ENCODE measurements at regions of chr19 and their contacts with region 1.

Region 1: GRCh38 chr19:2507109-2507508 is 31.2 kb downstream of the GADD45B start:
- DNase-seq: peak in 9 of 10 donors; percentile 13 to 69 (median 48)
- ATAC-seq: peak; percentile 9 to 69
- H3K4me3 Mint-ChIP-seq: peak overlapping the region in 8 of 10 donors; percentile 15 to 66 (median 47)
- H3K27ac Mint-ChIP-seq: peak overlapping the region; percentile 53 to 90 (median 83)
- H3K4me1 Mint-ChIP-seq: peaks cover 8 to 33% (median 32%) of the 10 kb centered on the region in 4 donors
- H3K27me3 Mint-ChIP-seq: peaks cover 0 to 2% (median 0%) of the 10 kb centered on the region in 5 donors

Region 2: GRCh38 chr19:2391118-2391725 is 115.9 kb before region 1 on chr19:
- POLR2A ChIA-PET with region 1: no interaction called
- DNase-seq: peak in 8 of 10 donors; percentile 36 to 76 (median 48)
- ATAC-seq: peak; percentile 49 to 57
- H3K4me3 Mint-ChIP-seq: no peak overlapping the region
- H3K27ac Mint-ChIP-seq: peak overlapping the region in 3 of 10 donors; percentile 66 to 74 (median 73)
- H3K4me1 Mint-ChIP-seq: peaks cover 3 to 16% (median 5%) of the 10 kb centered on the region in 4 donors
- H3K27me3 Mint-ChIP-seq: peaks cover 0 to 6% (median 0%) of the 10 kb centered on the region in 5 donors

Region 3: GRCh38 chr19:2494444-2495129 is 12.5 kb before region 1 on chr19:
- POLR2A ChIA-PET with region 1: interaction called, 18 read pairs
- DNase-seq: peak; percentile 28 to 77 (median 42)
- ATAC-seq: peak; percentile 75 to 81
- H3K4me3 Mint-ChIP-seq: peak overlapping the region; percentile 57 to 85 (median 80)
- H3K27ac Mint-ChIP-seq: peak overlapping the region in 6 of 10 donors; percentile 48 to 78 (median 68)
- H3K4me1 Mint-ChIP-seq: peaks cover 10 to 44% (median 34%) of the 10 kb centered on the region in 4 donors
- H3K27me3 Mint-ChIP-seq: peaks cover 3 to 42% (median 13%) of the 10 kb centered on the region in 5 donors

Region 4: DNA sequence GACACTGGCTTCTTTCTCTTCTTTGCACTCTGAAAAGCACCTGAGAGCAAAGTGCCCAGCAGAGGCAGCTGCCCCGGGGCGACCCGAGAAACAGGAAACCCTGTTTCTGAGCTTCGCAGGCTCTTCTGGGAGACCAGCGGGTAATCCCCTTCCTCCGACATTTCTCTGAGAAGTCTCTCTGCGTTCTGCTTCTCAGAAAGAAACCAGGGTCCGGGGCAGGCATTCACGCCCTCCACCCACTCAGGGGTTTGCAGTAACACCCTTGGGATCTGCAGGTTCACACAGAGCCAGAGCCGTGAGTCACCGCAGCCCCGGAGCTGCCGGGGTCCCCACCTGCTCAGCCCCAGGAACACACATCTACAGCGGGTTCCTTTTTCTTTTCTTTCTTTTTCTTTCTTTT is 54.8 kb after region 1 on chr19:
- POLR2A ChIA-PET with region 1: interaction called, 11 read pairs
- DNase-seq: peak; percentile 42 to 82 (median 66)
- ATAC-seq: peak; percentile 94 to 98
- H3K4me3 Mint-ChIP-seq: peak overlapping the region; percentile 92 to 97 (median 96)
- H3K27ac Mint-ChIP-seq: peak overlapping the region; percentile 95 to 99 (median 98)
- H3K4me1 Mint-ChIP-seq: peaks cover 5 to 24% (median 19%) of the 10 kb centered on the region in 4 donors
- H3K27me3 Mint-ChIP-seq: no peaks in the 10 kb centered on the region

Region 5: GRCh38 chr19:2604747-2605329 is 97.7 kb after region 1 on chr19:
- POLR2A ChIA-PET with region 1: no interaction called
- DNase-seq: no peak
- ATAC-seq: no peak
- H3K4me3 Mint-ChIP-seq: no peak overlapping the region
- H3K27ac Mint-ChIP-seq: peak overlapping the region in 2 of 10 donors; percentile 27 to 66
- H3K4me1 Mint-ChIP-seq: peaks cover 7 to 32% (median 23%) of the 10 kb centered on the region in 4 donors
- H3K27me3 Mint-ChIP-seq: no peaks in the 10 kb centered on the region